ENCODE measurements at regions of chr9 and their contacts with region 1.

Region 1: GRCh38 chr9:96667361-96667728 is 12.2 kb upstream of the PRXL2C start:
- DNase-seq: no peak
- H3K4me3 ChIP-seq: no peak overlapping the region
- H3K27ac ChIP-seq: no peak overlapping the region
- H3K4me1 ChIP-seq: no peaks in the 10 kb centered on the region
- H3K27me3 ChIP-seq: no peaks in the 10 kb centered on the region
- CTCF ChIP-seq: no peak

Region 2: DNA sequence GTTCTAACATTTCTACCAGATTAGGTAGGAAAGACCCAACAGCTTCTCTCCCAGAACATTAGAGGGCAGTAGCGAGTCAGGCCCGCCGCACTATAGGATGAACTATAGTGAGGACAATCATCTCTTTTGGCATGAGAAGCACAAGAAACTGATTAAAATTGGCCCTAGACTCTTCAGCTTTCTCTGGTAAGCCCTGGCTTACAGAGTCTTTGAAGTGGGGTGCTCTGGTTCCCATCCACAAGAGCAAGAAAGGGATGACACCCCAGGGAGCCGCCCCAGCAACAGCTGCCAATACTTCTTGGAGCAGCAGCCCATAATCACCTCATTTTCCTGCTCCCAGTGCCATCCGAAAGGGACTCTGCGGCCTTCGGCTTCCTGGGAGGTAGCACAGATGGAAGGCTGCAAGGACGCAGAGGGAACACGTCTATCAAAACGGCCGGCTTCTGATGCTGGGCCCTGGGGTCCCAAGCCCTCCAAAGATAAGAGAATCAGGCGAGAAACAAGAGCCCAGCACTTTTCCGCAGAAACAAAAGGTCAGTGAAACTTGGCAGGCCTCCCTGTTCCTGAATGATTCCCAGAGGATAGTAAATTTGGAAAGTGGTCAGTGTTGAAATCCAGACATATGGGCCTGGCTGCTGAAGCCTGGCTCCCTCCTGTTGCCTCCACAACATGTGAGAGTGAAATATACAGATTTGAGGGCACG is 434.7 kb before region 1 on chr9:
- CTCF ChIA-PET with region 1: no interaction called
- POLR2A ChIA-PET with region 1: no interaction called
- intact Hi-C with region 1: loop called (anchors 5 kb)
- DNase-seq: peak; percentile 51 to 54
- H3K4me3 ChIP-seq: no peak overlapping the region
- H3K27ac ChIP-seq: no peak overlapping the region
- H3K4me1 ChIP-seq: no peaks in the 10 kb centered on the region
- H3K27me3 ChIP-seq: 0 out of 2 replicates have a peak, but pooled peaks cover 4% of the 10 kb centered on the region
- CTCF ChIP-seq: peak; percentile 89

Region 3: DNA sequence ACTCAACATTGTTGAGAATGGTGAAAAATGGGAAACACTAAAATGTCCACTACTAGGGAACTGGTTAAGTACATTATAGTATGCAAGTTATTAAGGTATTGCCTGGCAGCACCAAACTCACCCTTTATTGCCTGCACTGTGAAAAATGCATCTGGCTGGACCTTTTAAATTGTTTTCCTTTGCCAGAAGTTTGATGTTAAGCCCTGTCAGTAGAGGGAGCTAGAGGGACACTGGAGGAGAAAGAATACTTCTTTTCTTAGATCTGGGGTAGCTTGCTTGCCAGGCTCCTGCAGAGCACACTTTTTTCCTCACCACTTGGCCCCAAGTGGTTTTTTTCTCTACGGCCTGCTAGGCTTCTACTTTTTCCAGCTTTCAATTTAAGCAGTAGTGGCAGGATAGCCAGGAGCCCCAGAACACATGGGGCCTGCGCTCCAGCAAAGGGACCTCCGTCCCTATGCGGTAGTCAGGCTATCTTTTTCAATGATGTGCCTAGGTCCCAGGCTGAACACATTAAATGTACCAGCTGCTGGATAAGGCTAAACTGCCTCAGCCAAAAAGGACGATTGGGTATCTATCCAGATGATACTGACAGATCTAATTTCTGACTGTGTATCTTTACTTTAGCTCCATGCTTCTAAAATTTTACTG is 225.4 kb before region 1 on chr9:
- CTCF ChIA-PET with region 1: interaction called, 5 read pairs
- POLR2A ChIA-PET with region 1: no interaction called
- intact Hi-C with region 1: loop called (anchors 1 kb)
- DNase-seq: peak; percentile 26 to 58
- H3K4me3 ChIP-seq: no peak overlapping the region
- H3K27ac ChIP-seq: no peak overlapping the region
- H3K4me1 ChIP-seq: no peaks in the 10 kb centered on the region
- H3K27me3 ChIP-seq: no peaks in the 10 kb centered on the region
- CTCF ChIP-seq: peak; percentile 78

Measured in PC-9 (cell line).